CD4-positive, alpha-beta T cell (primary cell): ENCODE measurements at regions of chrX and their contacts with region 1.

Region 1: DNA sequence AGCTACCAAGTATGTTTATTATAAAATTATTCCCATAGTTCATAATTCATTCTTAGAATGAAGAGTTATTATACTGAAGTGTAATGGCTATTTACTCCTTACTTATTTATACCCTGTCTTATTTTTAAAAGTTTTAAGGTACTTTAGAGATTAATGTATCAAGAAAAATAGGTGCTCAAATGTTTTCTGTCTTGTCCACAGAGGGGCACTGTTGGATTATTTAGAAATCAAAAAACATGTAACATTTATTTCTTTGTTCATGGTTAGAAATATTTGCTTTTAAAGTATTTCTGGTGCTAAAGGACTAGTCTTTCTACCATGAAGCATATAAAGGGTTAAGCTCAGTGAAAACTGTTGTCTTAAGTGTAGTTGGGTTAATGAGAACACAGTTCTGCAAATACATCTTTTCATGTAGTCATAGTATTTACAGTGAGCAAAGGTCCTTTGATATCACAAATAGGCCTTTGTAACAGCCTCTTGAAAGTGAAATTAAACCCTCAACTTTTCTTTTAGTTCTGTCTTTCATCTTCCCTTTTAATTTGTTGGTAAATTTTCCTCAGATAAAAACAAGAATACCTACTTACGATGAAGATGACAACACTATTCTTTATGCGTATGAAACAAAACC is 7.7 kb downstream of the SCML1 start:
- DNase-seq: peak in 3 of 14 experiments; percentile 11 to 26 (median 25)
- ATAC-seq: no peak
- H3K4me3 ChIP-seq: no peak overlapping the region
- H3K4me3 Mint-ChIP-seq: no peak overlapping the region
- H3K27ac ChIP-seq: no peak overlapping the region
- H3K27ac Mint-ChIP-seq: no peak overlapping the region
- H3K4me1 ChIP-seq: no peaks in the 10 kb centered on the region
- H3K4me1 Mint-ChIP-seq: peaks cover 43% of the 10 kb centered on the region
- H3K27me3 ChIP-seq: peaks cover 0 to 2% of the 10 kb centered on the region in 2 experiments
- H3K27me3 Mint-ChIP-seq: no peaks in the 10 kb centered on the region
- CTCF ChIP-seq: peak; percentile 38

Region 2: GRCh38 chrX:17697191-17697590 is 47.8 kb before region 1 on chrX:
- CTCF ChIA-PET with region 1: no interaction called
- POLR2A ChIA-PET with region 1: no interaction called
- intact Hi-C with region 1: loop called in 1 of 2 experiments (anchors 2 kb)
- DNase-seq: peak in 3 of 14 experiments; percentile 7 to 31 (median 22)
- ATAC-seq: peak; percentile 34
- H3K4me3 ChIP-seq: no peak overlapping the region
- H3K4me3 Mint-ChIP-seq: no peak overlapping the region
- H3K27ac ChIP-seq: no peak overlapping the region
- H3K27ac Mint-ChIP-seq: no peak overlapping the region
- H3K4me1 ChIP-seq: no peaks in the 10 kb centered on the region
- H3K4me1 Mint-ChIP-seq: no peaks in the 10 kb centered on the region
- H3K27me3 ChIP-seq: no peaks in the 10 kb centered on the region
- H3K27me3 Mint-ChIP-seq: no peaks in the 10 kb centered on the region
- CTCF ChIP-seq: no peak

Region 3: DNA sequence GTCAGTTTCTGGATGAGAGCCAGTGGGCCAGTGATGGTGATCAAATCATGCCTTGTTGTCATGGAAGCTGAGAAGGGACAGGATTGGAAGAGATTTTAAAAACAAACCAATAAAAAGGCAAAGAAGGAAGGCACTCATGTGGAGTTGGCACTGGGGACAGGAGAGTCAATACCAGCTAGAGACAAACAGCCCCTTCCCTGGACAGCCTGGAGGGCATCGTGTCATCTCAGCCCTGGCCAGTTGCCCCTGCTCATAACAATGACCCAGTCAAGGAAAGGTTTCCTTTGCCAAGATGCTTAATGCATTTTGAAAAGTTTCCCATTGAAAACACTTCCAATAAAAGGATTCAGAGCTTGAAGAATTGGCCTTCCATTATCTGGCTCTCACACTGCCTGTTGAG is 47.8 kb after region 1 on chrX:
- CTCF ChIA-PET with region 1: no interaction called
- POLR2A ChIA-PET with region 1: no interaction called
- intact Hi-C with region 1: loop called in 1 of 2 experiments (anchors 5 kb)
- DNase-seq: no peak
- ATAC-seq: no peak
- H3K4me3 ChIP-seq: no peak overlapping the region
- H3K4me3 Mint-ChIP-seq: no peak overlapping the region
- H3K27ac ChIP-seq: no peak overlapping the region
- H3K27ac Mint-ChIP-seq: no peak overlapping the region
- H3K4me1 ChIP-seq: peaks cover 5% of the 10 kb centered on the region
- H3K4me1 Mint-ChIP-seq: peaks cover 18% of the 10 kb centered on the region
- H3K27me3 ChIP-seq: no peaks in the 10 kb centered on the region
- H3K27me3 Mint-ChIP-seq: no peaks in the 10 kb centered on the region
- CTCF ChIP-seq: no peak